ENCODE measurements at regions of chr3 and their contacts with region 1.

Region 1: GRCh38 chr3:120417272-120417911 is 33.4 kb downstream of the FSTL1 start:
- DNase-seq: peak; percentile 92
- H3K4me3 Mint-ChIP-seq: peak overlapping the region; percentile 66
- H3K27ac Mint-ChIP-seq: peak overlapping the region; percentile 68
- H3K4me1 Mint-ChIP-seq: peaks cover 12% of the 10 kb centered on the region
- H3K27me3 Mint-ChIP-seq: no peaks in the 10 kb centered on the region
- CTCF ChIP-seq: peak; percentile 48

Region 2: GRCh38 chr3:120245386-120245785 is 172.0 kb before region 1 on chr3:
- CTCF ChIA-PET with region 1: interaction called, 45 read pairs
- intact Hi-C with region 1: loop called (anchors 1 kb)
- DNase-seq: no peak
- H3K4me3 Mint-ChIP-seq: no peak overlapping the region
- H3K27ac Mint-ChIP-seq: no peak overlapping the region
- H3K4me1 Mint-ChIP-seq: no peaks in the 10 kb centered on the region
- H3K27me3 Mint-ChIP-seq: peaks cover 19% of the 10 kb centered on the region
- CTCF ChIP-seq: no peak

Region 3: DNA sequence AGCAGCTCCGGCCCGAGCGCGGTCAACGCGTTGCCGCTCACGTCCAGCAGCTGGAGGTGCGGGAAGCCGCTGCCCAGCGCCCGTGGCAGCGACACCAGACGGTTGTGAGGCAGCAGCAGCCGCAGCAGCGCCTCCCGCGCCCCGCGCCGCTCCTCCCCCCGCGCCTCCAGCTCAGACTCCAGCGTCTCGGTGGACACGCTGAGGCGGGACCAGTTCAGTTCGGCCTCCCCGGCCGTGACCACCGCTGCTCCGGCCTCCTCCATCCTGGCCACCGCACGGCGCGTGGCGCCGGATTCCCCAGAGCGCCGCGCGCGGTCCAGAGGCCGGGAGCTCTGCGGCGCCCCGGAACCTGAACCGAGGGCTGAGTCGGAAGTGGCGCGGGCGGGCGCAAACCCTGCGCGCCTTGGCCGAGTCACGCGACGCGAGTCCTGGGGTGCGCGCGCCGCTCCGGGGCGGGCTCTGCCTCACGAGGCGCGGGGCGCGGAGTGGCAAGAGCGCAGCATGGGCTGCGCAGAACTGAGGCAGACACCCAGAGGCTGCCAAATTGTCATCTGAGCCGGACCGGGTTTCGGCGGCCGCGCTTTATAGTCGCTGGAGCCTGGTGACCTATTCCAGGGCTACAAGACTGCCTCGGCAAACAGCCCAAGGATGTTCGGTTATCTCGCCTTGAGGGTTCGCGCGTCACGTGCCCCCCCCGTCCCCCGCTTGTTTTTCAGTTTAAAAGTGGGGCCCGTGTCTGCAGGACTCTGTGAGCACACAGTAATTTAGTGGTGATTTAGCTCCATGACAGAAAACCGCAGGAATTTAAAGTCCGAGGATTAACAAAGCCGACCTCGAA is 68.2 kb before region 1 on chr3 and contains the start of gene LRRC58:
- CTCF ChIA-PET with region 1: interaction called, 27 read pairs
- intact Hi-C with region 1: loop called (anchors 2 kb)
- DNase-seq: peak; percentile 90
- H3K4me3 Mint-ChIP-seq: peak within 1 kb of the TSS; percentile 94
- H3K27ac Mint-ChIP-seq: peak within 1 kb of the TSS; percentile 79
- H3K4me1 Mint-ChIP-seq: peaks cover 24% of the 10 kb centered on the region
- H3K27me3 Mint-ChIP-seq: no peaks in the 10 kb centered on the region
- CTCF ChIP-seq: no peak
- total RNA-seq, gene LRRC58: 19.9 and 20.8 TPM in 2 replicates

Region 4: GRCh38 chr3:120442975-120443517 is 25.7 kb after region 1 on chr3:
- CTCF ChIA-PET with region 1: interaction called, 13 read pairs
- intact Hi-C with region 1: loop called (anchors 1 kb)
- DNase-seq: no peak
- H3K4me3 Mint-ChIP-seq: no peak overlapping the region
- H3K27ac Mint-ChIP-seq: no peak overlapping the region
- H3K4me1 Mint-ChIP-seq: no peaks in the 10 kb centered on the region
- H3K27me3 Mint-ChIP-seq: no peaks in the 10 kb centered on the region
- CTCF ChIP-seq: peak; percentile 16

Region 5: DNA sequence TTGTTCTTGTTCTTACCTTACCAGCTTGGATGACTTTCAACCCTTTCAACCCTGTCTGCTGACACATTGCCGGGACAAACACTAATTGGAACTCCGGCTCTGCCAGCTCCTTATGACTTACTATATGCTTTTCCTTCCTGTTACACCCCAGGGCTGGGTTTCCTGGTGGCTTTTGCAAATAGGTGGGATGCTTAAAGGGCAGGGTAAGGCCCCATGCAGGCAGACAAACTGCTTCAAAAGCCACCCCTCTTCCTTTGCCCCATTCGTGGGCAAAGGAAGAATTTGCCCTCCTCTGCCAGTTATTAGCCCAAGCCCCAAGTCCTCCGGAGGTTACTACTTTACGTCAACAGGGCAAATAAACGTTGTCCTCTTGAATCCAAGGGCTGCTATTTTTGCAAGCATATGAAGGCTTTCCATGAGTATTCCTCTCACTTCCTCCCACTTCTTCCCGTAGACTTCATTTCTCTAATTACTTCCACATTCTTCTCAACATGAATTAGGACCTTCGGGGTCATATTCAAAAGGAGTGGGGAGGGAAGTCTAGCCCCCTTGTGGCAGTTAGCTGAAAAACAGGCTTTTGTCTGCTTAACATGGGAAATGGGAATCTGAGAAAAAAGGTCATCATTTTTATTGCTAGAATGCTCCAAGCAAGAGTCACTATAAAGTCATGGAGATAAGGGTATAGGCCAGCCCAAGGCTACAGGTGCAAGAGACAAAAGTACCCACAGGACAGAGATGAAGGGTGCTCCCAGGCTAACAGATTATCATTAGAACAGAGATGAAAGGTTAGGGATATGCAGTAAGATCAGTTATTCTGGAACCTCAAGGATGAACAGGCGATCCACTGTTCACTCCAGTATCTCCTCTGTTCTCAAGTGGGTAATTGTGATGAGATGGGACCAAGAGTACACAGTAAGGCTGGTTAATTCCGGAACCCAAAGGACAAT is 89.7 kb after region 1 on chr3:
- CTCF ChIA-PET with region 1: interaction called, 7 read pairs
- intact Hi-C with region 1: loop called (anchors 1 kb)
- DNase-seq: peak; percentile 45
- H3K4me3 Mint-ChIP-seq: peak overlapping the region; percentile 16
- H3K27ac Mint-ChIP-seq: peak overlapping the region; percentile 57
- H3K4me1 Mint-ChIP-seq: peaks cover 19% of the 10 kb centered on the region
- H3K27me3 Mint-ChIP-seq: no peaks in the 10 kb centered on the region
- CTCF ChIP-seq: peak; percentile 41

Region 6: GRCh38 chr3:120558771-120559241 is 141.4 kb after region 1 on chr3:
- CTCF ChIA-PET with region 1: interaction called, 93 read pairs
- intact Hi-C with region 1: loop called (anchors 1 kb)
- DNase-seq: peak; percentile 86
- H3K4me3 Mint-ChIP-seq: peak overlapping the region; percentile 75
- H3K27ac Mint-ChIP-seq: peak overlapping the region; percentile 91
- H3K4me1 Mint-ChIP-seq: peaks cover 20% of the 10 kb centered on the region
- H3K27me3 Mint-ChIP-seq: no peaks in the 10 kb centered on the region
- CTCF ChIP-seq: peak; percentile 90

Region 7: DNA sequence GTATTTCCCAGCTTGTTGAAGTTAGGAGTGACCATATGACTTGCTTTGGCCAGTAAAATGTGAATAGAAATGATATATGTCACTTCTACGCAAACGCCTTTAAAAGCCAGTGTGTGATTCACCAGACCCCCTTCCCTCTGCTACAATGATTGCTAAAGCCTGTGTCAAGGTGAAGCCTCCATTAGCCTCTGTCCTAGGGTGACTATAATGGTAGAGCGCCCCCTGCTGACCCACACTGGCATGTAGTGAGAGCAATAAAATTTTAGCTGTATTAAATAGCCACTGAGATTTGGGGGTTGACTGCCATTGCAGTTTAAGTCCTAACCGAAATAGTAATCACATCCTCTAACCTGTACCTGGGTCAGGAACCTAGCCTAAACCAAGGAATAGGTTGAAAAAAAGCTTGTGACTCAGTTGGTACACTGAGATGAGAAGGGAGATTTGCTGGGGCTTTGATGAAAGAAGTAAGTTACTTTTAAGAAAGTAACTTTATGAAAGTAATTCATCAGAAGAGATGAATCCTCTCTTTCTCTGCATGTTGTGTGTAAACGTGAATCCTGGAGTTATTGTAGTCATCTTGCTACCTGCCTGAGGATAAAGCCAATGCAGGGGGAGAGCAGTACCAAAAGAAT is 377.7 kb after region 1 on chr3:
- CTCF ChIA-PET with region 1: interaction called, 4 read pairs
- intact Hi-C with region 1: loop called (anchors 2 kb)
- DNase-seq: peak; percentile 86
- H3K4me3 Mint-ChIP-seq: no peak overlapping the region
- H3K27ac Mint-ChIP-seq: no peak overlapping the region
- H3K4me1 Mint-ChIP-seq: no peaks in the 10 kb centered on the region
- H3K27me3 Mint-ChIP-seq: no peaks in the 10 kb centered on the region
- CTCF ChIP-seq: peak; percentile 76